ENCODE measurements at regions of chr4 and their contacts with region 1.

Region 1: GRCh38 chr4:74932816-74933561 is at the start of gene PARM1:
- DNase-seq: peak; percentile 95 to 97 (median 95)
- ATAC-seq: peak; percentile 96
- H3K4me3 ChIP-seq: peak within 1 kb of the TSS; percentile 37
- H3K4me1 ChIP-seq: peaks cover 4% of the 10 kb centered on the region
- CTCF ChIP-seq: peak; percentile 55
- total RNA-seq, gene PARM1: 120 to 286 (median 209) TPM

Region 2: DNA sequence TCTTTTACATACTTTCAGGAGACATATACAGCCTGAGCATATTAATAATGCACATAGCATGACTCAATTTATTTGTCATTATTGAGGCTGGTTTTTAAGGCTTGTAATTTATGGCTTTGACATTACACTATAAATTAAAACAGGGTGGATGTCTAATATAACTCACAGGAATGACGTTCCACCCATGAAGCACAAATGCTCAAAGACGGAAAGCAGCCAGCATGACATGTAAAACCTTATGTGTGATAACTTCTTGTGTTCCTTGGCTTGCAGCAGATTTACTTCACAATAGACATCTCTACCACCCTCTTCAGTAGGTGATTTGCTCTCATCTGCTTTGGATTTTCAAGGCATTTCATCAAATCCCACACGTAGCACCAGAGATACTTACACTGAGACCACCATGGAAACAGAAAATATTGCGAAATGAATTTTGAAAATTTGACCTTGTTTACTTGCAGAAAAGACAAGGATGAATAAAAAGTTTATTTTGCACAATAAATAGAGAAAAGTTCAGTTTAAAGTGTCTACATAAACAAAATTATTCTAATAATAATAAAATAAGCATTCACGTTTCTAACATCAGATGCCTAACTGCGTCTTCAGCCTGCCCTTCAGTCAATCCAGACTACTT is 73.9 kb before region 1 on chr4:
- intact Hi-C with region 1: no loop called
- DNase-seq: no peak
- ATAC-seq: no peak
- H3K4me3 ChIP-seq: no peak overlapping the region
- H3K4me1 ChIP-seq: no peaks in the 10 kb centered on the region
- CTCF ChIP-seq: no peak

Region 3: GRCh38 chr4:75289914-75290582 is 357.1 kb after region 1 on chr4:
- intact Hi-C with region 1: loop called in 1 of 2 experiments (anchors 5 kb)
- DNase-seq: peak in 2 of 3 donors; percentile 35 to 61
- ATAC-seq: peak; percentile 84
- H3K4me3 ChIP-seq: no peak overlapping the region
- H3K4me1 ChIP-seq: peaks cover 13% of the 10 kb centered on the region
- CTCF ChIP-seq: peak; percentile 18

Measured in mucosa of descending colon (tissue), 3 donors.